PC-3 (cell line): ENCODE measurements at regions of chr15 and their contacts with region 1.

Region 1: DNA sequence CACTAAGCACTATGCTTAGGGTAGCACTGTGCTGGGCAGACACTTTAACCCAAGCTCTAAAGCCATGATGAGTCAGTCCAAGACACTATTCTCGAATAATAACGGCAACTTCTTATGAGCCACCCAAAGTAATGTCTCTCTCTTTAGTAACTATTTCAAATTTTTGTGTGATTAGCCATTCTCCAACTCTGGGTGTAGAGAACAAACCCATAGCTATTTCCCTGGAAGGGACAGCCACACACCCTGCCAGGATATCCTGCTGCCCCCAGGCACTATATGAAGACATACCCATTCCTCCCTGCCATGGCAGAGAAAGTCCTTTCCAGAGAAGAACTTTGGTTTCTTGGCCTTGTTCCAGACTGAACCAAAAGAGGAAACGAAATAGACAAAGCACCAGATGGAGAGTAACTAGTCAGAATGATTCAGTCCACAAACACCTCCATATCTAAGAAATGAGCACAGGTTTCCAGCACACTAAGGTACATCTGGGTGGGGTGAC is 384.8 kb upstream of the THBS1 start:
- DNase-seq: peak; percentile 100
- ATAC-seq: peak; percentile 88
- H3K4me3 ChIP-seq: no peak overlapping the region
- H3K27ac ChIP-seq: peak overlapping the region; percentile 86
- H3K4me1 ChIP-seq: peaks cover 82% of the 10 kb centered on the region
- H3K27me3 ChIP-seq: no peaks in the 10 kb centered on the region
- CTCF ChIP-seq: no peak

Region 2: DNA sequence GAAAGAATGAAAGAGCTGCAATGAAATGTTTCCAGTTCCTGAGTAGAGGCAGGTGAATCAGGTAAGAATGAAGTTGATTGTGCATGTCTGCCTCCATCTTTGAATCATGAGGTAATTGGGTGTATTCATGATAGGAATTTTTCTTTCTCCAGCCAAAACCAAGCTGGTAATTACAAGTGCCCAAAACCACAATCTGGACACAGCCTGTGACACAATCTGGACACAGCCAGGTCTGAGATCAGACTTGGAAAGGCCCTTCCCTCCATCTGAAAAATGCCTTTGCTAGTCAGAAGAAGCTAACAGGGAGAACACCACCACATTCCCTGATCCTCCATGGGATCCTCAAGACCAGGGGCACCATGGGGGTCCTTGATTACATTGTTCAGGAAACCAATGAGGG is 46.3 kb after region 1 on chr15:
- CTCF ChIA-PET with region 1: interaction called, 3 read pairs
- POLR2A ChIA-PET with region 1: no interaction called
- intact Hi-C with region 1: loop called (anchors 2 kb)
- DNase-seq: peak; percentile 83
- ATAC-seq: peak; percentile 59
- H3K4me3 ChIP-seq: no peak overlapping the region
- H3K27ac ChIP-seq: peak overlapping the region; percentile 68
- H3K4me1 ChIP-seq: peaks cover 59% of the 10 kb centered on the region
- H3K27me3 ChIP-seq: no peaks in the 10 kb centered on the region
- CTCF ChIP-seq: no peak

Region 3: DNA sequence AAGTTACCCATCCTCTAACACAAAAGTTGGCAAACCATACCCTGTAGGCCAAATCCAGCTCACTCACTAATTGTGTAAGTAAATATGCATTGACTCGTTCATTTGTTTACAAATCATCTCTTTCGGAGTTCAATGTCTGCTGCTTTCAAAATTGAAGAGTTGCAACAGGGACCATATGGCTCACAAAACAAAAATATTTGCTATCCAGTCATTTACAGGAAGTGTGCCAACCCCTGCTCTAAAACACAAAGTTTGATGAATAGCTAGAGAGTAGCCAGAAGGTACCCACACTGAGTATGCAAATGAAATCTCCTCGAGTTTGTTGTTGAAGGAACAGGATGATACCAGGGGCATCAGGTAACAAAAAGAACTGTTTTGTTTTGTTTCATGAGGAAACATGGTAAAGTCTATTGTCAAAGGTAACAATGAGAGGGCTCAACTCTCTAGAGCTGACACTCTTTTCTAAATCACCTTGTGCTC is 148.7 kb after region 1 on chr15:
- CTCF ChIA-PET with region 1: no interaction called
- POLR2A ChIA-PET with region 1: no interaction called
- intact Hi-C with region 1: no loop called
- DNase-seq: peak; percentile 51
- ATAC-seq: peak; percentile 33; the same call in 1 of the 2 replicates
- H3K4me3 ChIP-seq: no peak overlapping the region
- H3K27ac ChIP-seq: no peak overlapping the region
- H3K4me1 ChIP-seq: peaks cover 6% of the 10 kb centered on the region
- H3K27me3 ChIP-seq: no peaks in the 10 kb centered on the region
- CTCF ChIP-seq: no peak